Activated B cell treated with CpG ODN at 0.5 μM for 24 hours (primary cell): ENCODE measurements at regions of chr2 and their contacts with region 1.

Region 1: GRCh38 chr2:11344342-11344955 is at the start of gene ROCK2:
- DNase-seq: peak; percentile 73
- ATAC-seq: peak; percentile 67
- H3K4me3 Mint-ChIP-seq: peak within 1 kb of the TSS; percentile 99
- H3K27ac Mint-ChIP-seq: peak within 1 kb of the TSS; percentile 86
- H3K4me1 Mint-ChIP-seq: peaks cover 29% of the 10 kb centered on the region
- H3K27me3 Mint-ChIP-seq: no peaks in the 10 kb centered on the region
- CTCF ChIP-seq: no peak
- total RNA-seq, gene ROCK2: 18.5 and 18.8 TPM in 2 replicates

Region 2: GRCh38 chr2:11154923-11155380 is 189.5 kb before region 1 on chr2:
- CTCF ChIA-PET with region 1: no interaction called
- POLR2A ChIA-PET with region 1: interaction called, 20 read pairs
- intact Hi-C with region 1: loop called (anchors 1 kb)
- DNase-seq: peak; percentile 91
- ATAC-seq: peak; percentile 92
- H3K4me3 Mint-ChIP-seq: peak overlapping the region; percentile 85
- H3K27ac Mint-ChIP-seq: peak overlapping the region; percentile 84
- H3K4me1 Mint-ChIP-seq: peaks cover 20% of the 10 kb centered on the region
- H3K27me3 Mint-ChIP-seq: no peaks in the 10 kb centered on the region
- CTCF ChIP-seq: no peak

Region 3: DNA sequence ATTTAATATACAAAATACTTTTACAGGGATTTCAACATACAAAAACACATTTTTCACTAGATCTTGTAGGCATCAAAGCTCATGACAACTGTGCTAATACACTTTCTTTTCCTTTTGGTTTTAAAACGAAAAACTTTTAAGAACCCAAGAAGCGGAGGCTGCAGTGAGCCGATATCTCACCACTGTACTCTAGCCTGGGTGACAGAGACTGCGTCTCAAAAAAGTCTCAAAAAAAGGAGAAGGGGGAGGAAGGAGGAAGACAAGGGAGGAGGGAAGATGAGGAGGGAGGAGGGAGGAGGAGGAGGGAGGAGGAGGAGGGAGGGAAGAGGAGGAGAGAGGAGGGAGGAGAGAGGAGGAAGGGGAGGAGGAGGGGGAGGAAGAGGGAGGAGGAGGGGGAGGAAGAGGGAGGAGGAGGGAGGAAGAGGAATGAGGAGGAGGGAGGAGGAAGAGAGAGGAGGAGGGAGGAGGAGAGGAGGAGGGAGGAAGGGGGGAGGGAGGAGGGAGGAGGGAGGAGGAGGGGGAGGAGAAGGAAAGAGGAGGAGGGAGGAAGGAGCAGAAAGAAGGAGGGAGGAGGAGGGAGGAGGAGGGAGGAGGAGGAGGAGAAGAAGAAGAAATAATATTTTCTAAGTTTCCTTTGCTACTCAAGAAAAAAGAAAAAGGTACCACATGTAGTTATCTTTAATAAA is 13.8 kb before region 1 on chr2:
- CTCF ChIA-PET with region 1: no interaction called
- POLR2A ChIA-PET with region 1: interaction called, 4 read pairs
- intact Hi-C with region 1: loop called (anchors 1 kb)
- DNase-seq: no peak
- ATAC-seq: no peak
- H3K4me3 Mint-ChIP-seq: no peak overlapping the region
- H3K27ac Mint-ChIP-seq: no peak overlapping the region
- H3K4me1 Mint-ChIP-seq: peaks cover 13% of the 10 kb centered on the region
- H3K27me3 Mint-ChIP-seq: no peaks in the 10 kb centered on the region
- CTCF ChIP-seq: no peak

Region 4: DNA sequence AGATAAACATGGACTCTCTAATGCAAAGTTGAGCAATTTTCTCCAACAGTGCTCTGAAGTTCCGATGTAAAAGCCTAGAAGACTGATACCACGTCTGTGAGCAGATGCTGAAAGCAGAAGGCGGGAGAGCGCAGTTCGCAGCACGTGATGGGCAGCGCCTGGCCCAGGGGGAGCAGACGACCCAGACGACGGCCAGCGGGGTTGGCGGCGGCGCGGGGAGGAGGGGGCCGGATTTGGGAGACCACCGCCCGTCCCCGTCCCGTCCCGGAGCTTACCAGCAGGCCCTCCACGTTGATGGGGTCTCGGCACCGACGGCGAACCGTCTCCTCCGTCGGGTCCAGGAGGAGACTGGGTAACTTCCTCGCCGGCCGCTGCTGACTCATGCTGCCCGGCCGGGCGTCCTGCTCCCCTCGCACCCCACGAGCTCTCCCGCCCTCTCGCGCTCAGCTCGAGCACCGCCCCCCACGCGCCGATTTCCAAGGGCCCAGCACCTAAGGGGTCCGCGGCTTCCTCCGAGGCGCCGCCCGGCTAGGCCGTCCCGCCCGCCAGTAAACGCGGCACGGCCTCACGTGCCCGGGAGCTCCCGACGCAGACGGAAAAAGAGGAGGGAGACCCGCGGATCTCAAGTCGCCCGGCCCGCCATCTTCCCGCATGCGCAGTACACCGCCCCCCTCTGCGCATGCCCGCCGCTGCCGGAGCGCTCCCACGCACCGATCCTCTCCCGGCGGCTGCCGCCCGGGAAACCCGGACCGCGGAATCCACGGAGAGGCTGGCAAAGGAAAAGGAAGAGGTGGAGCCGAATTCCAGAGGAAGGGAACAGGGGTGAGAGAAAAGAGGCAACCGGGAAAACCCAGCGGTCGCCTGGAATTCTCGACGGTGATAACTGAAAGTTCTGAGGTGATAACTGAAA is 121.3 kb after region 1 on chr2 and contains the start of gene E2F6:
- CTCF ChIA-PET with region 1: no interaction called
- POLR2A ChIA-PET with region 1: no interaction called
- intact Hi-C with region 1: loop called (anchors 2 kb)
- DNase-seq: peak; percentile 93
- ATAC-seq: peak; percentile 81
- H3K4me3 Mint-ChIP-seq: peak within 1 kb of the TSS; percentile 98
- H3K27ac Mint-ChIP-seq: peak within 1 kb of the TSS; percentile 89
- H3K4me1 Mint-ChIP-seq: peaks cover 31% of the 10 kb centered on the region
- H3K27me3 Mint-ChIP-seq: no peaks in the 10 kb centered on the region
- CTCF ChIP-seq: no peak
- total RNA-seq, gene E2F6: 11.8 and 12.4 TPM in 2 replicates